Lower leg skin (tissue), 4 donors: ENCODE measurements at regions of chr1 and their contacts with region 1.

Region 1: DNA sequence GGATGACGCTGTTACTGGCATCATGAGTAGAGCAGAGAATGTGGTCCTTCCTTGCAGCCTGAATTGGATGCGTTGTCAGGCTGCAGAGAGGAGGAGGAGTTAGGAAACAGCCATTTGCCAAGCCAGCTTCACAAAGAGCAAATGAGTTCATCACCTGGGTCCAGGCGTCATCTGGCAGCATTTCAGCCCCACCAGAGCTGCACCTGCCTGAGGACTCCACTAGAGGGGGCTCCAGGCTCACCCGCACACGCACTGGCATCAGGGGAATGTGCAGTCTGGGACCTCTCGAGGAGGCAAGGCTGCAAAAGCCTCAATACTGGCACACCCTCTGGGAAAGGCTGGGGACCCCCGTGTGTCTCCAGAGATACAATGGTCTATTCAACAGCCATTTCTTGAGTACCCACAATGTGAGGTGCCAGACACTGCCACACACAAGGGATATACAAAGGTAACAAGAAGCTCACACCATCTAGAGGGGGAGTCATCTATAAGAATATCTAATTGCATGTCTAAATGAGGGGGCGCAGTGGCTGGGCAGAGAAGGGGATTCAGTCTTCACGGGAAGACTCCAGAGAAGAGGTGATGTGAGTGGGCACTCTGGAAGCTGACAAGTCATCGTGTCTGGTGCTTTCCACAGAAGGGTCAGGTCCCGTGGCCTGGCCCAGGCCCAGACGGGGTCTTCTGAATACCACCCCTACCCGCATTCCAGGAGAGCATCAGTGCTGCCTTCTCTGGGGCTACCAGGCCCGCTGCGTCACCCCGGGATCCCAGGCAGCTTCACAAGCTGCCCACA is 53.5 kb upstream of the CNTN2 start:
- DNase-seq: peak; percentile 39 to 90
- H3K4me3 ChIP-seq: no peak overlapping the region
- CTCF ChIP-seq: peak in 1 of 3 donors; percentile 79
- POLR2A ChIP-seq: no peak

Region 2: GRCh38 chr1:205061665-205062069 is 72.2 kb after region 1 on chr1:
- intact Hi-C with region 1: loop called (anchors 5 kb)
- DNase-seq: peak in 1 of 2 donors; percentile 58
- H3K4me3 ChIP-seq: no peak overlapping the region
- CTCF ChIP-seq: peak in 1 of 3 donors; percentile 45
- POLR2A ChIP-seq: no peak

Region 3: DNA sequence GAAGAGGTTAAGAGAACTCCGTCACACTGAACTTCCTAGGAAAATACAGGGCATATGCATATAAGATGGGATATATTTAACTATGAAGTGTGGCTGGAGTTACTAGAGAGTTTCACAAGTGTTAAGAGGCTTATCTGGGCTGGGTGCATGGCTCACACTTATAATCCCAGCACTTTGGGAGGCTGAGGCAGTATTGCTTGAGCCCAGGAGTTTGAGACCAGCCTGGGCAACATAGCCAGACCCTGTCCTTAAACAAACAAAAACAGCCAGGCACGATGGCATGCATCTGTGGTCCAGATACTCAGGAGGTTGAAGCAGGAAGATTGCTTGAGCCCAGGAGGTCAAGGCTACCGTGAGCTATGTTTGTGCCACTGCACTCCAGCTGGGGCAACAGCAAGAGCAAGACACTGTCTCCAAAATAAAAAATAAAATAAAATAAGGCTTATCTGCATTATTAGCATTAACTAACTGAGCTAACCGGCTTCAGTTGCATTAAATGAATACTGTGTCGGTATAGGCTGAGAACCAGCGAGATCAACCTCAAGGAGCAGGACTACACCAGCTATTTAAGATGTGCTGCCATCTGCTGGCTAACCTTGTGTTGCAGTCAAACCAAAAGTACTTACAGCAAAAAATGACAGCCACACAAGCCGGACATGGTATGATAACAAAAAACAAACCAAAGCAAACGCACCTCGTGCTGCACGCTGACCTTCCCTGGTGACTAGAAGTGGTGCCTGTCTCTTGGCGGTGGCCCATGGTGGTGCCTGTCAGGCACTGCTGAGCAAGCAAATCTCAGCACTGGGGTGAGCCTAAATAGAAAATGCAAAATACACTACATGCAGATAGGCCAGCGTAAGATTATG is 152.0 kb after region 1 on chr1:
- intact Hi-C with region 1: loop called (anchors 5 kb)
- DNase-seq: peak; percentile 74 to 91
- H3K4me3 ChIP-seq: no peak overlapping the region
- CTCF ChIP-seq: no peak
- POLR2A ChIP-seq: no peak